Cardiac septum (tissue), 1 donor: ENCODE measurements at regions of chr1 and their contacts with region 1.

Region 1: DNA sequence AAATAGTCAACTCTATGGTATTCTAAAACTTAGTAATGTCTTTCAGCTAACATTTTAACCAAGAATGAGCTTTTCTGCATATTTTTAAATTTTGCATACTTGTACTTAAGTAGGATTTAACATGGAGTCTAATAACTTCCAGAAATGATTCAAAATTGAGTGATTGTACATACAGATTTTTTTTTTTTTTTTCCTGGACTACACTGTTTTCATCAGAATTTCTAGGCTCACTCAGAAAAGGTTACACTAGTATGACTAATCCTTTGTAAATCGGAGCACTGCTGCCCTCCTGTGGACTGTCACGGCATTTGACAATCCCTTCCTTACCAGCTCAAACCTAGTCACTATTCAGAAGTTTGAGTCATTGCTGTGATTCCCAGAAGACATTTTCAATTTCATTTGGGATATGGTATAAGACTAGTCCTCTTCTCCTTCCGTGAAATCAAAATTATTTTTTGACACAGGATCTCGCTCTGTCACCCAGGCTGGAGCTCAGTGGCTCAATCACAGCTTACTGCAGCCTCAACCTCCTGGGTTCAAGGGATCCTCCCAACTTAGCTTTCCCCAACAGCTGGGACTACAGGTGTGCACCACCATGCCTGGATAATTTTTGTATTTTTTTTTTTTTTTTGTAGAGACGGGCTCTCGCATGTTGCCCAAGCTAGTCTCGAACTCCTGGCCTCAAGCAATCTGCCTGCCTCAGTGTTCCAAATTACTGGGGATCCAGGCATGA is 45.5 kb downstream of the CD46 start:
- DNase-seq: peak; percentile 86

Region 2: DNA sequence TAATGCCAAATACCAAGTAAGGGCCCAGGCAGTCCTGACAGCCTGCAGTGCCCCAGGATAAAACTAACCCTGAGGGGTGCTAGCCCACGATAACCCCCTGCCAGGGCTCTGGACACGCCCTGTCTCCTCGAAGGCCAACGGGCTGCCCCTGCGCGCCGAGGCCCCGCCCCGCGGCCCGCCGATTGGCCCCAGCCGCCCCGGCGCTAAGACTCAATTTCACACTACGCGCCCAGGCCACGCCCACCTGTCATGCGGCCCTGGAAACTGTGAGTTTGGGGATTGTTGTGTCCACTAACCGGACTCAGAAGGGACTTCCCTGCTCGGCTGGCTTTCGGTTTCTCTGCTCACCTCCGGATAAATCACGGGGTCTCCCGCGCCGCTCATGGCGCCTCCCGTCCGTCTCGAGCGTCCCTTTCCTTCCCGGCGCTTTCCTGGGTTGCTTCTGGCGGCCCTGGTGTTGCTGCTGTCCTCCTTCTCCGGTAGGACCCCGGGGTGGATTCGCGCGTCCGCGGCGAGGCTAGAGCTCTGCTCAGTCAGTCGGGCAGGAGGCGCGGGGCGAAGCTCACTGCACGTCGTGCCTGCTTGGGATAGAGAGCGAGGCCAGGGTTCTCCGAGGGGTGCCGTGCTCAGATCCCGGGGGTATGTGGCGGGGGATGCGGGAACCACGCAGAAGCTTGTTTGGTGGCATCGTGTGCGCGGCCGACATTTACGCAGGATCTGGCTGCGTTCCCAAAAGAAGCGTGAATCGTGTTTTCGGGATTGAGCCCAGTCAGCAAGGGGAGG is 152.4 kb before region 1 on chr1 and contains the start of gene CR1L:
- intact Hi-C with region 1: loop called (anchors 10 kb)
- DNase-seq: peak; percentile 86
- total RNA-seq, gene CR1L: not detected